ENCODE measurements at regions of chr3 and their contacts with region 1.

Region 1: GRCh38 chr3:14124615-14125190 is at the starts of genes CHCHD4 and TMEM43:
- DNase-seq: peak; percentile 98
- H3K4me3 Mint-ChIP-seq: peak within 1 kb of the TSS; percentile 93
- H3K27ac Mint-ChIP-seq: peak within 1 kb of the TSS; percentile 96
- H3K4me1 Mint-ChIP-seq: peaks cover 67% of the 10 kb centered on the region
- H3K27me3 Mint-ChIP-seq: no peaks in the 10 kb centered on the region
- total RNA-seq, gene CHCHD4: 27.8 and 29.4 TPM in 2 replicates
- total RNA-seq, gene TMEM43: 40.4 and 41.3 TPM in 2 replicates

Region 2: GRCh38 chr3:13419505-13420044 is 705.1 kb before region 1 on chr3:
- intact Hi-C with region 1: loop called (anchors 10 kb)
- DNase-seq: peak; percentile 56
- H3K4me3 Mint-ChIP-seq: peak overlapping the region; percentile 88
- H3K27ac Mint-ChIP-seq: peak overlapping the region; percentile 92
- H3K4me1 Mint-ChIP-seq: peaks cover 71% of the 10 kb centered on the region
- H3K27me3 Mint-ChIP-seq: no peaks in the 10 kb centered on the region

Region 3: DNA sequence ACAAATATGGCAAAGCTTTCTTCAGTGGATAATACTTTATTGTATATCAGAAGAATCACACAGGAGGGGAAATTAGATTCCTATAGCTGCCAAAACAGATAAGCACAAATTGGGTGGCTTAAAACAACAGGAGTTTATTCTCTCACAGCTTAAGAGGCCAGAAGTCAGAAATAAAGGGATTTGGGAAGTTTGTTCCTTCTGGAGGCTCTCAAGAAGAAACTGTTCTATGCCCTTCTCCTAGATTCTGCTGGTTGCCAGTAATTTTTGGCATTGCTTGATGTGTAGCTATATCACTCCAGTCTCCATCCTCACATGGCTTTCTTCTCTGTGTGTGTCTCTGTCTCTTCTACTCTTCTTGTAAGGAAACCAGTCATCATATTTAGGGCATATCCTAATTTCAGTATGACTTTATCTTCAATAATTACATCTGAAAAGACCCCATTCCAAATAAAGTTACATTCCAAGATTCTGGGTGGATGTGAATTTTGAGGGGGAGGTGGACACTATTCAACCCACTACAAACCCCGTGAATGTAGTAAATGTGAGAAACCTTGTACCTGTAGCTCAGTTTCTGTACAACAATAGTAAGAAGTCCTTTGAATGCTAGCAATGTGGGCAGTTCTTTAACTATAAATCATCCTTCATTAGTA is 222.6 kb before region 1 on chr3:
- intact Hi-C with region 1: no loop called
- DNase-seq: no peak
- H3K4me3 Mint-ChIP-seq: no peak overlapping the region
- H3K27ac Mint-ChIP-seq: no peak overlapping the region
- H3K4me1 Mint-ChIP-seq: no peaks in the 10 kb centered on the region
- H3K27me3 Mint-ChIP-seq: no peaks in the 10 kb centered on the region

Region 4: GRCh38 chr3:14082108-14082657 is 42.5 kb before region 1 on chr3:
- intact Hi-C with region 1: loop called (anchors 1 kb)
- DNase-seq: no peak
- H3K4me3 Mint-ChIP-seq: peak overlapping the region; percentile 9
- H3K27ac Mint-ChIP-seq: peak overlapping the region; percentile 45
- H3K4me1 Mint-ChIP-seq: peaks cover 8% of the 10 kb centered on the region
- H3K27me3 Mint-ChIP-seq: peaks cover 6% of the 10 kb centered on the region

Region 5: GRCh38 chr3:14144423-14145075 is 19.8 kb after region 1 on chr3:
- intact Hi-C with region 1: loop called (anchors 1 kb)
- DNase-seq: peak; percentile 75
- H3K4me3 Mint-ChIP-seq: peak overlapping the region; percentile 64
- H3K27ac Mint-ChIP-seq: peak overlapping the region; percentile 93
- H3K4me1 Mint-ChIP-seq: peaks cover 59% of the 10 kb centered on the region
- H3K27me3 Mint-ChIP-seq: no peaks in the 10 kb centered on the region

Region 6: DNA sequence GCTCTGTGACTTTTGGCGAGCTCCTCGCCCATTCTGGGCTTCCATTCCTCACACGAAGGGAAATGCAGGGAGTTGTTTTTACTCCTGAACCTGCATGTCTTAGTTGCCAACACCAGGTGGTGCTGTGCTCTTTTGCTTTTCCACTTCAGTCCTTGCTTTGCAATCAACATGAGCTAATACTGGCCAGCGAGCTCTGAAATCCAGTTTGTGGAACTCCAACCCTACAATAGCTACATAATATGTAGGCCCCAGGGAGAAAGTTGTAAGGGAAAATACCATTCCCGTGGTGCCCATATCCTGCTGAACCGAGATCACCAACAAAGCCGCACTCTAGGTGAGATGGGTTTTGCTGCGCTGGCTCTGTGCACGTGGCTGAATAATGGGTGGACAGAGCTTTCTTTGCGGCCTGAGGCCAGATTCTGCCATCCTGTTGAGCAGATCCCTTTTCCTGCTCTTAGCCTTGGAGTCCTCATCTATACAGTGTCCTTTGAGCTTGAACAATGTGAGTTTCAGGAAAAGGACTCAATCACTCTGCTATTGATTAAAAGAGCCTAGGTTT is 78.9 kb after region 1 on chr3:
- intact Hi-C with region 1: no loop called
- DNase-seq: peak; percentile 11
- H3K4me3 Mint-ChIP-seq: no peak overlapping the region
- H3K27ac Mint-ChIP-seq: no peak overlapping the region
- H3K4me1 Mint-ChIP-seq: peaks cover 4% of the 10 kb centered on the region
- H3K27me3 Mint-ChIP-seq: no peaks in the 10 kb centered on the region

Region 7: DNA sequence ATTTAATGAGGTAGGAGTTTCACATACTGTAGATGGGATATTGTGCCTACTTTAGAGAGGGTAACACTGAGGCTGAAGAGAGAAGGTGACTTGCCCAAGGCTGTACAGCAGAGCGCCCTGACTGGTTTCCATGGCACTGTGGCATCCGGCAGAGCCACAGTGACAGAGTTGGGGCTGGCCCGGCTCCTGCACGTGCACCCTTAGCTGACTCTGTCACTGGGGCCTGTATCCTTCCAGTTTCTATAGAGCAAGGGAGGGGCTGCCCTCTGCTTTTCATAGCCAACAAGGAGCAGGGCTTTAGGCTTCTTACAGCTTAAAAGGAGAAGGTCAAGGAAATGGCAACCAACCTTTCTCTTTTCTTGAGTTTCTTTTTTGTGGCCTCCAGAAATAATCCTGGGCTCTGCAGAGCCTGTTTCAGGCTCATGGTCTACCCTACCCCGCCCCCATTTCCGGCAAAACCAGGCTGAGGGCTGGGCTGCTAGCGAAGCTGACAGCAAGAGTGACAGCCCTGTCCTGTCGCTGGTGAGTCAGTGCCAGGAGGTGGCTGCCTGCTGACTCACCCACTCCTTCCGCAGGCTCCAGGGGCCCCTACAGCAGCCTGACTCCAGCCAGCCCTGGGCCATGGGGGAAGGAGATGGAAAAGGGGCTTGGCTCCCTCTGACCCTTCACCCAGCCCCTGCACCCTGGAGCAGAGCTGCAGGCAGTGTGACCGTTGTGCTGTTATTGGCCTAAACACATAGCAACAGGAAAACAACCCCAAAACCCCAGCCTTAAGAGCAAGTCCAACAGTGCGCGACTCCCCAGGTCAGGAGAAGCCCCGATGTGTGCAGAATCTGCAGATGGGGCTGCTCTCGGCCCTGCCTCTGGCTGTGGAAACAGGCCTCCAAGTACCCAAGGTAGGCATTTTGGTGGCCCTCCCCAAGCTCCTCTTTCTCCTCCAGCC is 307.5 kb after region 1 on chr3:
- intact Hi-C with region 1: loop called (anchors 1 kb)
- DNase-seq: peak; percentile 92
- H3K4me3 Mint-ChIP-seq: peak overlapping the region; percentile 76
- H3K27ac Mint-ChIP-seq: peak overlapping the region; percentile 97
- H3K4me1 Mint-ChIP-seq: peaks cover 85% of the 10 kb centered on the region
- H3K27me3 Mint-ChIP-seq: no peaks in the 10 kb centered on the region

Region 8: GRCh38 chr3:14651440-14652251 is 526.9 kb after region 1 on chr3 and contains the start of gene CCDC174:
- intact Hi-C with region 1: loop called (anchors 1 kb)
- DNase-seq: peak; percentile 94
- H3K4me3 Mint-ChIP-seq: peak within 1 kb of the TSS; percentile 99
- H3K27ac Mint-ChIP-seq: peak within 1 kb of the TSS; percentile 90
- H3K4me1 Mint-ChIP-seq: peaks cover 38% of the 10 kb centered on the region
- H3K27me3 Mint-ChIP-seq: peaks cover 4% of the 10 kb centered on the region
- total RNA-seq, gene CCDC174: 16.6 and 21.7 TPM in 2 replicates

Region 9: DNA sequence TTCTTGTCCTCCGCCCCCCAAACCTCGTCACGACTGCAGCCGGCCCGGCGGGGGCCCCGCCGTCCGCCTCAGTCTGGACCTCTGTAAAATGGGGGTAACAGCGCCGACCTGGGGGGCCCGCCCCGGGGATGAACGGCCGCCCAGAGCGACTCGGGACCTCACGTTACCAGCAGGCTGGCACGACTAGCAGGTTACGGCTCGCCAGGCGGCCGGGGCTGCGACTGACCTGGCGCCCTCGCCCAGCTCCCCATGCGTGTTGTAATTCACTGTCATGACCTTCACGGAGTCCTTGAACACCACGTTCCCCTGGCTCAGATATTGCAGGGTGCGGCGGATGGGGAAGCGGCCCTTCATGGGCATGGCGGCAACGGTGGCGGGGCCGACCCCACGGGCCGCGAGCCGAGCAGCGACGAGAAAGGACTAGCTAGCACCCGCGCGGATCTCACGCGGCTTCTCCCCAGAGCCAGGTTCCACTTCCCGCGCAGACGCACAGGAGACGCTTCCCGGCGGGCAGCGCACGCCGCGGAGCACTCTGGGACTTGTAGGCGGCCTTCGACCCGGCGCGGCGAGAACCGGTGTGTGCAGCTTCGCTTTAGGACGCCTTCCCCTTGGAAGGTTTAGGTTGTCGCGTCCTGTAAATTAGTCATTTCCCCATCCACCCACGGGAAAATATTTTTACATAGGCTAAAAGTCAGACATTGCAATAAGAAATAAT is 940.3 kb after region 1 on chr3 and contains the start of gene MRPS25:
- intact Hi-C with region 1: loop called (anchors 1 kb)
- DNase-seq: peak; percentile 90
- H3K4me3 Mint-ChIP-seq: peak within 1 kb of the TSS; percentile 96
- H3K27ac Mint-ChIP-seq: peak within 1 kb of the TSS; percentile 95
- H3K4me1 Mint-ChIP-seq: peaks cover 20% of the 10 kb centered on the region
- H3K27me3 Mint-ChIP-seq: no peaks in the 10 kb centered on the region
- total RNA-seq, gene MRPS25: 96.5 and 105 TPM in 2 replicates

Measured in activated T-helper 1 cell treated with anti-CD3 and anti-CD28 coated beads, Interleukin-12 subunit alpha, Interleukin-12 subunit beta, Interleukin-2, Interleukin-4 antibody, amounts not matched to agents 30 ng/mL and 10 ng/mL and 1 ng/mL, durations not matched to agents 14 hours and 24 hours and 36 hours (primary cell).